ENCODE measurements at regions of chr17 and their contacts with region 1.

Region 1: GRCh38 chr17:27601069-27601975 is 29.7 kb upstream of the LGALS9 start:
- DNase-seq: peak; percentile 77
- H3K4me3 ChIP-seq: no peak overlapping the region; a peak in 1 of 4 replicates
- H3K27ac ChIP-seq: no peak overlapping the region
- H3K4me1 ChIP-seq: peaks cover 0 to 16% of the 10 kb centered on the region in 2 experiments; a peak in 2 of 4 replicates
- H3K27me3 ChIP-seq: no peaks in the 10 kb centered on the region
- CTCF ChIP-seq: peak; percentile 96
- EP300 ChIP-seq: no peak
- RAD21 ChIP-seq: peak; percentile 97

Region 2: DNA sequence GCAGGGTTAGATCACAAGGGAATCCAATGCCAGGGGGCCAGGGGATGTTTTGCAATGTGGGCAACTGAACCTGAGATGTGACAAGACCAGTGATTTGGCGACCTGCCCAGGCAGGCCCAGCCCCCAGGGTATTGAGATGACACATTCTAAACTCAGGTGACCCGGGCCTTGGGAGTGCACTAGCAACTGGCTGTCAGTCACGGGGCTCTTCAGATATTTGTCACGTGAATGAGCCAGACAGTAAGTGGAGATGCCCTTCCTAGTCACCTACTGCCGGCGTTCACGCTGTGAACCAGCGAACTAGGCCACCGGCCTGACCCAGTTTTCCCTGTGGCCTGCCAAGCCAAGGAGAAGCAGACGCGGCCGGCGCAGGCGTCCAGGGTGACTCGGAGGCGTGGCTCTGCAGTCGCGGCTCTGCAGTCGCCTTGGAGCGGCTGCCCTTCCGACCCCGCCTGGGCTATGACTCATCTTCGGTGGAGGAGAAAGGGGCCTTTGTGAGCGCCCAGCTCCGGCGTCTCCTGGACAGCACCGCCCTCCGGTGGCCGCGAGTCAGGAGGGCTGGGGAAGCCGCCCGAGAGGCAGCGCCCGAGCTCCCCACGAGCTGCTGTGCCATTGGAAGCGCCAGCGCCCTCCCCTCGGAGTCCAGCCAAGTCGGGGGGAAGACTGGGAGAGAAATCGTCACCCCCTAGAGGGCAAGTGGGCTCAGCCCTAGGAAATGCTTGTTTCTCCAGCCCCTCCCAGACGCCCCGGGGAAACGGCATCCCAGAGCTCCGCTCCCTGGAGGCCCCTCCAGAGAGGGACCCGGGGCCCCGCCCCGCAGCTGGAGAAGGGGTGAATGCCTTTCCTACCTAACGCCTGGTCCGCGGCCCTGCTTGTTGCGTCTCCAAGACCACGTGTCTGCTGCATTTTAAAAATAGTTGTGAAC is 268.6 kb before region 1 on chr17:
- CTCF ChIA-PET with region 1: interaction called, 32 read pairs
- POLR2A ChIA-PET with region 1: no interaction called
- DNase-seq: peak; percentile 92
- H3K4me3 ChIP-seq: peak overlapping the region; percentile 45 to 64
- H3K27ac ChIP-seq: peak overlapping the region; percentile 80 to 89
- H3K4me1 ChIP-seq: peaks cover 13 to 16% of the 10 kb centered on the region in 2 experiments; a peak in 2 of 4 replicates
- H3K27me3 ChIP-seq: no peaks in the 10 kb centered on the region
- CTCF ChIP-seq: peak; percentile 88
- EP300 ChIP-seq: peak in 1 of 2 experiments; percentile 14; a peak in 1 of 4 replicates
- RAD21 ChIP-seq: peak; percentile 94

Region 3: DNA sequence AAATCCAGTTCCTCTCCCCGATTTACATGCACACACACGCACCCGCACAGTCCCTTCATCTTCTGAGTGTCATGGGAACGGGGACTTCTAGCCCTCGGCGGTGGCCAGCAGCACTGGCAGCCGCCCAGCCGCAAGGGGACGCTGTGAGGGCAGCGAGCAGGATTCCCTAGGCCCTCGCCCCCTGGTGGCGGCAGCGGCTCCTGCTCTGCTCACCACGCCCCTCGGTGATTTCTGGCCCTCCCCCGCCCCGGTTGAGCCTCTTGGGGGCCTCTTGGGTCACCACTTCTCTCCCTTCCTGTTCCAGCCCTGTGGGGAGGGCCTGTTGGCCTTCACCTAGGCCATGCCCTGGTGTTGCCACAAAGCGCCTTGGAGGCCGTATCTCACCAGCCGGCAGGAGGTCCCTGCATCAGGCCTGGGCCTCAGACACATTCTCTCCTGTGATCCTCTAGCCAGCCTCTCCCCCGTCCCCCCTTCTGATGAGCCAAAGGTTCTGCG is 220.3 kb before region 1 on chr17:
- CTCF ChIA-PET with region 1: interaction called, 42 read pairs
- POLR2A ChIA-PET with region 1: no interaction called
- DNase-seq: peak; percentile 89
- H3K4me3 ChIP-seq: peak overlapping the region; percentile 18 to 31; a peak in 1 of 4 replicates
- H3K27ac ChIP-seq: no peak overlapping the region
- H3K4me1 ChIP-seq: peaks cover 23 to 30% of the 10 kb centered on the region in 2 experiments; a peak in 3 of 4 replicates
- H3K27me3 ChIP-seq: no peaks in the 10 kb centered on the region
- CTCF ChIP-seq: peak; percentile 85
- EP300 ChIP-seq: no peak
- RAD21 ChIP-seq: peak; percentile 57

Region 4: GRCh38 chr17:27455914-27456680 is 145.2 kb before region 1 on chr17 and contains the start of gene KSR1:
- CTCF ChIA-PET with region 1: interaction called, 222 read pairs
- POLR2A ChIA-PET with region 1: interaction called, 12 read pairs
- DNase-seq: peak; percentile 93
- H3K4me3 ChIP-seq: peak within 1 kb of the TSS; percentile 73 to 80
- H3K27ac ChIP-seq: peak within 1 kb of the TSS in 1 of 2 experiments; percentile 63; a peak in 1 of 4 replicates
- H3K4me1 ChIP-seq: peaks cover 8 to 41% of the 10 kb centered on the region in 2 experiments
- H3K27me3 ChIP-seq: no peaks in the 10 kb centered on the region
- CTCF ChIP-seq: peak; percentile 58
- EP300 ChIP-seq: no peak
- RAD21 ChIP-seq: peak; percentile 71
- polyA plus RNA-seq, gene KSR1: 7.5 and 7.9 TPM in 2 replicates

Region 5: GRCh38 chr17:27559506-27560481 is 41.5 kb before region 1 on chr17:
- CTCF ChIA-PET with region 1: interaction called, 27 read pairs
- POLR2A ChIA-PET with region 1: no interaction called
- DNase-seq: peak; percentile 58
- H3K4me3 ChIP-seq: 0 out of 4 replicates have a peak overlapping the region, but pooled peaks of 1 of the 2 experiments have one; percentile 1
- H3K27ac ChIP-seq: peak overlapping the region; percentile 56 to 72
- H3K4me1 ChIP-seq: peaks cover 24 to 28% of the 10 kb centered on the region in 2 experiments
- H3K27me3 ChIP-seq: no peaks in the 10 kb centered on the region
- CTCF ChIP-seq: no peak
- EP300 ChIP-seq: peak in 1 of 2 experiments; percentile 45; a peak in 1 of 4 replicates
- RAD21 ChIP-seq: no peak

Region 6: DNA sequence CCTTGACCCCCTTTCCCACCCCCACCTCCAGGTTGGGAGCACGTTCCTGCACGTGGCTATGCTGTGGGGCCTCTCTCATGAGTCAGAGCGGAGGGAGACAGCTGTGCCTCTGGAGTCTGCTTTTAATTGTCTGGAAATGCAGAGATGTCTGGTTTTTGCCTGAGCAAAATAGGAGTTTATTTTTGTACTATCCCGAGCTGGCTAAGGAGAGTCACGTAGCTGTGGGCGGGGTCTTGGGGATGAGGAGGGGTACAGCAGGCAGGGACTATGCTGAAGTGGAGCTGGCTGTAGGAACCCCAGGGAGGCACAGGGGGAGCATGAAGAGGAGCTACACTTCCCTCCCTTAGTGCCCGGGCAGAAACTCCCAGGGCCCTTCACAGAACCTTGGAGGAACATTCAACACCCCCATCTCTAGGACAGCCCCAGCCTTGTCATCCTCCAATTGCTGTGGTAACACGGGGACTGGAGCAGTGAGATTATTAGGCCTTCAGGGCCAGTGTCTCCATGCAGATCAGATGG is 15.1 kb before region 1 on chr17:
- CTCF ChIA-PET with region 1: interaction called, 99 read pairs
- POLR2A ChIA-PET with region 1: no interaction called
- DNase-seq: peak; percentile 76
- H3K4me3 ChIP-seq: 0 out of 4 replicates have a peak overlapping the region, but pooled peaks of 1 of the 2 experiments have one; percentile 12
- H3K27ac ChIP-seq: peak overlapping the region; percentile 74 to 97
- H3K4me1 ChIP-seq: peaks cover 17 to 40% of the 10 kb centered on the region in 2 experiments
- H3K27me3 ChIP-seq: no peaks in the 10 kb centered on the region
- CTCF ChIP-seq: no peak
- EP300 ChIP-seq: peak in 1 of 2 experiments; percentile 66; a peak in 1 of 4 replicates
- RAD21 ChIP-seq: no peak

Region 7: GRCh38 chr17:27721797-27722196 is 120.5 kb after region 1 on chr17:
- CTCF ChIA-PET with region 1: no interaction called
- POLR2A ChIA-PET with region 1: no interaction called
- DNase-seq: no peak
- H3K4me3 ChIP-seq: no peak overlapping the region
- H3K27ac ChIP-seq: no peak overlapping the region
- H3K4me1 ChIP-seq: no peaks in the 10 kb centered on the region
- H3K27me3 ChIP-seq: no peaks in the 10 kb centered on the region; the same call in 1 of the 2 replicates
- CTCF ChIP-seq: no peak
- EP300 ChIP-seq: no peak
- RAD21 ChIP-seq: no peak

Region 8: DNA sequence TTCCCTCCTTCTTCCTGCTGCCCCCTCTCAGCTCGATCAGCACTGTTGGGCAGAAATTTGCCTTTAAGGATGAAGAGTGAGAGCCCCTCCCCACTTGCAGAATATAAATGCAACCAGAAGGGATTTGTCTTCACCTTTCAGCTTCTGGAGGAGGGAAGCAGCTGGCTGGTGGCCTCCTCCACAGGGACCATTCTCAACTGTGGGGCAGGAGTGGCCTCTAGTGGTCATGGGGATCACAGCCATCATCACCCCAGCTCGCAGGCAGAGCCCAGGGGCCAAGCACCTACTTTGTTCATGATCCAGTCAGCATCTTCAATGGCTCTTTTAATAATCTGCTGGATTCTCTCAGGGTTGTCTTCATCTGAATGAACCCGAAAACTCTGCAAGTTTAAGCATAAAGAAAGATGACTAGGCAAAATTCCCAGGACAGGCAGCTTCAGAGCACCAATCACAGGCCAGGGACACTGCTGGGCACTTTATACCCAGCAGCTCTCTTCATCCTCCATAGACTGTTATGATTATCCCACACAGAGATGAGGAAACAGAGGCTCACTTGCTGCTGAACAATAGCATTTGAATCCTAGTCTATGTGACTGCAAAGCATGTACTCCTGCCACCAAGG is 278.8 kb after region 1 on chr17:
- CTCF ChIA-PET with region 1: interaction called, 14 read pairs
- POLR2A ChIA-PET with region 1: no interaction called
- DNase-seq: peak; percentile 88
- H3K4me3 ChIP-seq: no peak overlapping the region; a peak in 1 of 4 replicates
- H3K27ac ChIP-seq: no peak overlapping the region
- H3K4me1 ChIP-seq: peaks cover 0 to 3% of the 10 kb centered on the region in 2 experiments; a peak in 1 of 4 replicates
- H3K27me3 ChIP-seq: no peaks in the 10 kb centered on the region
- CTCF ChIP-seq: peak; percentile 89
- EP300 ChIP-seq: no peak
- RAD21 ChIP-seq: peak; percentile 95